Activated CD8-positive, alpha-beta T cell treated with anti-CD3 and anti-CD28 coated beads for 36 hours (primary cell): ENCODE measurements at regions of chr18 and their contacts with region 1.

Region 1: GRCh38 chr18:5890331-5891183 is 4.8 kb downstream of the TMEM200C start:
- DNase-seq: peak; percentile 45
- ATAC-seq: peak; percentile 87
- H3K4me3 Mint-ChIP-seq: no peak overlapping the region
- H3K27ac Mint-ChIP-seq: no peak overlapping the region
- H3K4me1 Mint-ChIP-seq: peaks cover 8% of the 10 kb centered on the region
- H3K27me3 Mint-ChIP-seq: peaks cover 48% of the 10 kb centered on the region
- CTCF ChIP-seq: peak; percentile 66

Region 2: GRCh38 chr18:5678779-5679406 is 211.7 kb before region 1 on chr18:
- CTCF ChIA-PET with region 1: no interaction called
- POLR2A ChIA-PET with region 1: no interaction called
- intact Hi-C with region 1: no loop called
- DNase-seq: no peak
- ATAC-seq: no peak
- H3K4me3 Mint-ChIP-seq: no peak overlapping the region
- H3K27ac Mint-ChIP-seq: no peak overlapping the region
- H3K4me1 Mint-ChIP-seq: no peaks in the 10 kb centered on the region
- H3K27me3 Mint-ChIP-seq: no peaks in the 10 kb centered on the region
- CTCF ChIP-seq: no peak

Region 3: DNA sequence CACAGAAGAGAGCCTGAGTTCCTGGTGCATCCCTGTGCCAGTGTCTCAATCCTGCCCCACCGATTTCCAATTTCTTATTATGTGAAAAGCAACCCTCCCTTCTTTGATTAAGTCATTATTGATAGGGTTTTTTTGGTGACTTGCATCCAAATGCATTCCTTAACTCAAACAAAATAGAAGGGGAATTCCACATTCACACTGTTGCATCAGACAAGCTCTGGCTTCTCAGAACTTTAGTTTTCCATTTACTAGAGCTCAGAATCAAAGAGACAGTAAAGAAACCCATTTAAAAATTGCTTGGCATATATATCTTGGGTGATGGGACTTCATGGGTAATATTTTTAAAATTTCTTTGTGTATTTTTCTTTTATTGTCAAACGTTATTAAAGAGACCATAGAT is 18.6 kb after region 1 on chr18:
- CTCF ChIA-PET with region 1: interaction called, 10 read pairs
- POLR2A ChIA-PET with region 1: no interaction called
- intact Hi-C with region 1: no loop called
- DNase-seq: no peak
- ATAC-seq: no peak
- H3K4me3 Mint-ChIP-seq: no peak overlapping the region
- H3K27ac Mint-ChIP-seq: no peak overlapping the region
- H3K4me1 Mint-ChIP-seq: peaks cover 3% of the 10 kb centered on the region
- H3K27me3 Mint-ChIP-seq: peaks cover 14% of the 10 kb centered on the region
- CTCF ChIP-seq: no peak